ENCODE measurements at regions of chr1 and their contacts with region 1.

Region 1: DNA sequence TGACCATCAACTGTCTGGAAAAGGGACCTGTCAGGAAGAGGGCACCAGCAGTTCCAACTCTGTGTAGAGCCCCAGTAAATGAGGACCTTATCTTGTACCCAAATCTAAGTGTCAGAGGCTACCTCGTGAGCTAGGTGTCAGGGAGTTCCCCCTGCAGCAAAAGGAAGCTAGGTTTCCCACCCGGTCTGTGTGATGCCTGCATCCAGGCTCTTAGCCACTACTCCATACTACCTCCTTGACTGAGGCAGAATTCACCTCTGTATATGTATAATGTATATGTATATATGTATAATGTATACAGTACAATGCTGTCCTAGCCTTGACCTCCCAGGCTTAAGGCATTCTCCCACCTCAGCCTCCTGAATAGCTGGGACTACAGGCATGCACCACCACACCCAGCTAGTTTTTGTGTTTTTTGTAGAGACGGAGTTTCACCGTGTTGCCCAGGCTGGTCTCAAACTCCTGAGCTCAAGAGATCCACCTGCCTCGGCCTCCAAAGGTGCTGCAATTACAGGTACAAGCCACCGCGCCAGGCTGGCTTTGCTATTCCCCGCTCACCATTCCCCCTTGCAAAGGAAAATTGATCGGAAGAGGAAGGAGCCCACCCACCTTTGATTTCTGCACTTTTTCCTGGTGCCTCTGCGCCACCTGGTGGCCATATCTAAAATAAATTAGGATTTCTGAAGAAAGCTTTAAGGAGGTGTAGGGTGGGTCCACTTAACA is 15.7 kb upstream of the LUZP1 start:
- DNase-seq: no peak
- ATAC-seq: peak in 2 of 4 donors; percentile 33 to 40
- H3K4me3 ChIP-seq: peak overlapping the region; percentile 24 to 45 (median 30)
- H3K27ac ChIP-seq: no peak overlapping the region
- H3K4me1 ChIP-seq: peaks cover 0 to 6% (median 0%) of the 10 kb centered on the region in 4 donors
- H3K27me3 ChIP-seq: no peaks in the 10 kb centered on the region
- CTCF ChIP-seq: peak; percentile 74 to 89 (median 82)
- POLR2A ChIP-seq: no peak

Region 2: DNA sequence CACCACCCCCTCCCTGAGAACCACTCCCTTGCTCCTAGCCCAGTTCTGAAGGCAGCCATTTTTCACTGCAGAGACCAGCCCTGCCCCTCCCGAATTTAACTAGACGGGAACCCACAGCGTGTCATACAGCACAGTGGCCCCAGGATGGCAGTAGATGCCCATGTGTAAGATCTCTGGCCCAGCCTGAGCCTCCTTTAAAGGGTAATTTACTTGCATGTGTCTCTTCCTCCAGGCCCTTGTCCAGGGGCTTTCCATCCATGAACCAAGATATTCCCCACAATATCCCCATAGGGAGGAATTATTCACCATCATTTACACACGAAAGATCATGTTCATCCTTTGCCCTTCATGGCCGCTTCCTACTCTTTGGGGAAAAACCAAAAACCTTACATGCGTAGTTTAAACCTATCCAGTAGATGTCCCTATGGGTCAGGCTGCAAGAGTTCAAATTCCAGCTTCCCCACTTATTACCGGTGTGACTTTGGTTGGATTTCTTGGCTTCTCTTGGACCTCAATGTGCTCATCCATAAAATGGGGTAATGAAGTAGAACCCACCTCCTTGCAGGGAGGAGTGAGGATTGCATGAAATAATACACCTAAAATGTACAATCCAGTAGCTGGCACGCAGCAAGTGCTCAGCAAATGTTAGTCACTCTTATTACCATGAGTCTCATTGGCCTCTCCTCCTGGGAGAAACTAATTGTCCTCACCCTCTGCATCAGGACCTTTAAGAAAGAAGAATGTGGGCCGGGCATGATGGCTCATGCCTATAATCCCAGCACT is 207.7 kb before region 1 on chr1:
- intact Hi-C with region 1: loop called (anchors 10 kb)
- DNase-seq: peak in 2 of 3 donors; percentile 59 to 70
- ATAC-seq: peak; percentile 95 to 98 (median 96)
- H3K4me3 ChIP-seq: no peak overlapping the region
- H3K27ac ChIP-seq: no peak overlapping the region
- H3K4me1 ChIP-seq: no peaks in the 10 kb centered on the region
- H3K27me3 ChIP-seq: no peaks in the 10 kb centered on the region
- CTCF ChIP-seq: peak; percentile 52 to 87 (median 64)
- POLR2A ChIP-seq: no peak

Region 3: DNA sequence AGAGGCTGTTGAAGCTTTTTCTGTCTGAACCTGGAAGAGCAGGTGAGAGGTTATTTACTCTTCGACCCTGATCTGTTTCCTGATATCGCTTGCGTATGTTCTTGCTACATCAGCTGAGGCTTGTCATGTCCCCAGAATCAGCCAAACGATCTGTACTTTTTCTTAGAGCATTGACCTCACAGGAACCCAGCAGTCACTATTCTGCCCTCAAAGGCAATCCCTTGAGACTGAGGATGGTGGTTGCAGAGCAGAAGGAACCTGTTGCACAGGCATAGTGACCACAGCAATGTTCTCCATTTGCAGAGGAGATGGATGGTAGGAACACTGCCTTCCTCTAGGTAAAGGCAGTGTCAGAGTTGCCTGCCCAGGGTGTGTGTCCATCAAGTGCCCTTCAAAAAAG is 200.4 kb before region 1 on chr1:
- intact Hi-C with region 1: loop called (anchors 10 kb)
- DNase-seq: no peak
- ATAC-seq: no peak
- H3K4me3 ChIP-seq: no peak overlapping the region
- H3K27ac ChIP-seq: no peak overlapping the region
- H3K4me1 ChIP-seq: no peaks in the 10 kb centered on the region
- H3K27me3 ChIP-seq: no peaks in the 10 kb centered on the region
- CTCF ChIP-seq: no peak
- POLR2A ChIP-seq: no peak

Region 4: DNA sequence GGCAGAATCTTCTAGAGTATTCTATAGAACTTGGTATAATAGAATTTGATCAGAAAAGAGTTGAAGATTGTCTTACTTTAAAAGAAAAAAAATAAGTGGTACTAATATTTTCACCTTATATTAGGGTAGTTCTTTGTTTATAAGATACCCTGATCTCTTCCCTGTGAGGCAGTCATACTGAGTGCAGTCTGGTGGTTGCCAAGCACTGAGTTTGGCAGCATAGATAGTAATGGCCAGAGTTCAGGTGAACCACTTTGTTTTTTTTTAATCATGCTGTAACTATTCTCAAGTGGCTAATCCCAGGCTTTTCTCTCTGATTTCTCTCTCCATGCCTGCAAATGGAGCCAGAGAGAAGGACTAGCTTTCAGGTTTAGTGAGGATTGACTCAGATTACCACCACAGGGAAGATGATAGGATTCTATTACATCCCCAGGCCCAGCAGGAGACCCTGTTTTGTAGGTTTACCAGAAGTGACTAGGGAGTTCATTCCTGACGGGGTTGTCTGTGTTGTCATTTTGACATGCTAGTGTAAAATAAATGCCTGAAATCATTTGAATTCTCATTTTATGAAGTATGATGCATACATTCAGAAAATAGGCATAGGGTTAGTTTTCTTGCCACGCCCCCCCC is 148.4 kb before region 1 on chr1:
- intact Hi-C with region 1: no loop called
- DNase-seq: no peak
- ATAC-seq: no peak
- H3K4me3 ChIP-seq: no peak overlapping the region
- H3K27ac ChIP-seq: no peak overlapping the region
- H3K4me1 ChIP-seq: no peaks in the 10 kb centered on the region
- H3K27me3 ChIP-seq: no peaks in the 10 kb centered on the region
- CTCF ChIP-seq: no peak
- POLR2A ChIP-seq: no peak

Region 5: DNA sequence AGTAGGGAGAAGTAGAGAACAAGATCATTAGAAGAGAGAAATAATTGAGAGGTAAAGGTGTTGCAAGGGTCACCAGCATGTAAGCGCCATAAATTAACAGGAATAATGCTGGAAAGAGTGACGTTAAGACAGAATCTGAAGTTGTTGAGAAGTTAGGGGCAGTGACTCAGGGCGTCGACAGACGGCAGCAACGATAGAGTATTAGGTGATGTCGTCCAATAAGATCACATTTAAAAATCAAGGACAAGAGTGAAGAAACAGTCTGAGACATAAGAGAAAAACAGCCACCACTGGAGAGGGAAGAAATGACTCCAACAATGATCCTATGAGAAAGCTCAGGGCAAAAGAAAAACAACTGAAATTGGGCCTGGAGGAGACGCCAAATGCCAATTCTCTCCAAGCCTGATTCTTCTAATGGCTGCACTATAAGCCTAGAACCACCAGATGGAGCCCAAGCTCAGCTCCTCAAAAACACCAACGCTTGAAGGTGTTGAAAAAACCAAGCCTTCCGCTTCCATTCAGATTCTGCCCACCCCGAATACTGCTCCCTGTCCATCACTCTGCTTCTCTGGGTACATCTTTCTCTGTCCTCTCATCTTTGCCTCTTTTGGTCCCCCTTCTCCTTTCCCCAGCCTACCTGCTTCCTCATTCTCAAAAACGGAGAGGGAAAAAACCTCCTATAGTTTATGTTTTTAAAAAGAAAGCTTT is 85.8 kb before region 1 on chr1:
- intact Hi-C with region 1: loop called (anchors 2 to 5 kb)
- DNase-seq: peak in 1 of 3 donors; percentile 64
- ATAC-seq: peak; percentile 81 to 91 (median 88)
- H3K4me3 ChIP-seq: no peak overlapping the region
- H3K27ac ChIP-seq: no peak overlapping the region
- H3K4me1 ChIP-seq: peaks cover 0 to 24% (median 8%) of the 10 kb centered on the region in 4 donors
- H3K27me3 ChIP-seq: no peaks in the 10 kb centered on the region
- CTCF ChIP-seq: peak; percentile 83 to 95 (median 92)
- POLR2A ChIP-seq: no peak